ENCODE measurements at regions of chr10 and their contacts with region 1.

Region 1: GRCh38 chr10:35598384-35598783 is 6.8 kb upstream of the GJD4 start:
- DNase-seq: no peak
- ATAC-seq: no peak
- H3K4me3 ChIP-seq: no peak overlapping the region
- H3K27ac ChIP-seq: no peak overlapping the region
- H3K4me1 ChIP-seq: no peaks in the 10 kb centered on the region
- H3K27me3 ChIP-seq: peaks cover 27% of the 10 kb centered on the region
- CTCF ChIP-seq: peak; percentile 32
- POLR2A ChIP-seq: no peak
- RAD21 ChIP-seq: 0 out of 2 replicates have a peak, but pooled peaks have one; percentile 5

Region 2: DNA sequence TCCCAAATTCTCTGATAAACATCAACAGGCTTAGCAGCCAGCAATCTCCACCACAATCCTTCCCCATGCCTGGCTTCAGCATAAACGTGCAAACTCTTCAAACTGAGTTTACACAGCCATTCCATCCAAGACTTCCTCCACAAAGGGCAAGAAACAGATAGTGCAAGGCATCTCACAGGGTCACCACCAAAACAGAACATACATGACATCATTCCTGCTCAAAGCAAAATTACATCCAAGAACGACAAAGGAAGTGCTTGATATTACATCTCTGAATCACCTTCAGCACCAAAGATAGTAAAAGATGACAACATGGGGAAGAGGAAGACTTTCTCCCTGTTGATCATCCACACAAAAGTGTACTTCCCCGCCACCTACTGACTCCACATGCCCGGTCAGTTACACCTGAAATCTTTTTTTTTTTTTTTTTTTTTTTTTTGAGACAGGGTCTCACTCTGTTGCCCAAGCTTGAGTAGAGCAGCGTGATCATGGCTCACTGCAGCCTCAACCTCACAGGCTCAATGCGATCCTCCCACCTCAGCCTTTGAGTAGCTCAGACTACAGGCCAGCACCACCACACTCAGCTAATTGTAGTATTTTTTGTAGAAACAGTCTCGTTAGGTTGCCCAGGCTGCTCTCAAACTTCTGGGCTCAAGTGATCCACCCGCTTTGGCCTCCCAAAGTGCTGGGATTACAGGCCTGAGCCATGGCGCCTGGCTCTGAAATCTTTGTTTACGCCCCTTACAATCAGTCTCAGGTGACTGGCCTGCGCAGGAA is 910.8 kb before region 1 on chr10:
- CTCF ChIA-PET with region 1: no interaction called
- POLR2A ChIA-PET with region 1: interaction called, 11 read pairs
- dilution Hi-C with region 1: no loop called
- in situ Hi-C with region 1: no loop called
- intact Hi-C with region 1: no loop called
- DNase-seq: peak; percentile 69
- ATAC-seq: peak; percentile 42
- H3K4me3 ChIP-seq: no peak overlapping the region
- H3K27ac ChIP-seq: no peak overlapping the region
- H3K4me1 ChIP-seq: peaks cover 7% of the 10 kb centered on the region; the same call in 1 of the 2 replicates
- H3K27me3 ChIP-seq: no peaks in the 10 kb centered on the region
- CTCF ChIP-seq: no peak
- POLR2A ChIP-seq: no peak
- RAD21 ChIP-seq: no peak

Region 3: DNA sequence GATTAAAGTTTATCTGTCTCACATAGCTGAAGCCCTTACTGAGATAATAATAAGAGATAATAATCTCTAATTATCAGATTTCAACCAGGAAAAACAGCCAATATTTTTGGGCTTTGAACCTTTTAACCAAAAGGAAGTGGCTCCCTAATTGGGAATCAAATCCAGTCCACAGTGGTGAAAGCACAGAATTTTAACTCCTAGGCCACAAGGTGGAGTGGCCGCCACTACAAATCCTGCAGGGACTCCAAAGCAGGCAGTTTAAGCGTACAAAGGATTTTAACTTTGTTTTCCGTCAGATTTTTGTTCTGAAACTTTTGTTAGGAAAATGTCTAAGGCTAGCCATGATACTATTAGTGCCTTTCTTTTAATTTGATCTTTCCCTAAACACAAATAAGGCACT is 361.6 kb before region 1 on chr10:
- CTCF ChIA-PET with region 1: no interaction called
- POLR2A ChIA-PET with region 1: no interaction called
- dilution Hi-C with region 1: no loop called
- in situ Hi-C with region 1: no loop called
- intact Hi-C with region 1: loop called (anchors 10 kb)
- DNase-seq: peak; percentile 37
- ATAC-seq: peak; percentile 79
- H3K4me3 ChIP-seq: no peak overlapping the region
- H3K27ac ChIP-seq: no peak overlapping the region
- H3K4me1 ChIP-seq: no peaks in the 10 kb centered on the region
- H3K27me3 ChIP-seq: no peaks in the 10 kb centered on the region
- CTCF ChIP-seq: peak; percentile 48
- POLR2A ChIP-seq: no peak
- RAD21 ChIP-seq: peak; percentile 62

Region 4: GRCh38 chr10:35781643-35782035 is 183.3 kb after region 1 on chr10:
- CTCF ChIA-PET with region 1: no interaction called
- POLR2A ChIA-PET with region 1: no interaction called
- dilution Hi-C with region 1: no loop called
- in situ Hi-C with region 1: no loop called
- intact Hi-C with region 1: no loop called
- DNase-seq: no peak
- ATAC-seq: no peak
- H3K4me3 ChIP-seq: no peak overlapping the region
- H3K27ac ChIP-seq: no peak overlapping the region
- H3K4me1 ChIP-seq: no peaks in the 10 kb centered on the region
- H3K27me3 ChIP-seq: peaks cover 2% of the 10 kb centered on the region; the same call in 1 of the 2 replicates
- CTCF ChIP-seq: 0 out of 2 replicates have a peak, but pooled peaks have one; percentile 11
- POLR2A ChIP-seq: no peak
- RAD21 ChIP-seq: no peak

Region 5: DNA sequence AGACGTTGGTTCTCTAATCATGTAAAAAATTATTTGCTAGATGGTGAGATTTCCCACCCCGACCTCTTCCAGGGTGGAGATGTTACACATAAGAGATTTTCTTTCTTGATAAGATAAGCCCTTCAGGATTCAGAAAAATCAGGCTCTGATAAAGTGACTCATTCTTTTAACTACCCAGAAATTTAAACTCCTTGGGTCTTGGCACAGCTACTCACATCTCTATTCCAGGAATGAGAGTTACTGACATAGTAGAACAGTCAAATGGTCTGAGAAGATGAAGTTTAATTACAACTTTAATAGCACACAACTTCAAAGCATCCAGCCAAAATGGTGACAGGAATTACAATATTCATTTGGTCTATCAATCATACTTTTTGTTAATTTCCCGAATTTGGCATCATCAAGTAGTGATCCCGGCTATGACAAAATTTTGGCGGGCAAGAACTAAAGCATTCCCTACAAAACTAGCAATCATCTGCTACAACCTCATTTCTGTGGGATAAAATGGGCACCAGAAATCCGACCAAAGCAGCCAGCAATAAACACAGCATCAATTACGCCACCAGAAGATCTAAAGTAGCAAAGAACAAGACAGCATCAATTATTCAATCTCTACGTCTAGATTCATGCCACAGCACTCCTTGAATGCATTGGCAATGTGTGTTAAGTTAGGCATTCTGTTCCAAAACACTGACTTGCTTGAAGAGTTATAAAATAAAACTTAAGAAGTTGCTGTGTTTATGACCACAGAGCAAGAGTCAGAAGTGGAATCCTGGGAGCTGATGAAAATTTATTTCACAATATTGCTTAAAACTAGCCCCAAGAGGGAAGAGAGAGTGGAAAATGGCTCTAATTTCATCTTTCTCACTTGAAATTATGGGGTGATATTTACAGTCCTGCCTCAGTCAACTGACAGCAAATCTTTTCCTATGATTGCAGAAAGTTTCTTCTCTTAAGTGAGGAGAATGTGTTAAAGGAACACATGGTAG is 961.3 kb after region 1 on chr10:
- CTCF ChIA-PET with region 1: no interaction called
- POLR2A ChIA-PET with region 1: no interaction called
- dilution Hi-C with region 1: no loop called
- in situ Hi-C with region 1: no loop called
- intact Hi-C with region 1: no loop called
- DNase-seq: peak; percentile 39
- ATAC-seq: peak; percentile 37
- H3K4me3 ChIP-seq: no peak overlapping the region
- H3K27ac ChIP-seq: no peak overlapping the region
- H3K4me1 ChIP-seq: no peaks in the 10 kb centered on the region
- H3K27me3 ChIP-seq: no peaks in the 10 kb centered on the region
- CTCF ChIP-seq: no peak
- POLR2A ChIP-seq: no peak
- RAD21 ChIP-seq: no peak

Measured in IMR-90 (cell line).